Calu3 (cell line): ENCODE measurements at regions of chr22 and their contacts with region 1.

Region 1: GRCh38 chr22:49917974-49918910 is at the starts of genes ALG12 and CRELD2:
- DNase-seq: peak; percentile 97
- H3K4me3 Mint-ChIP-seq: peak within 1 kb of the TSS; percentile 85
- H3K27ac Mint-ChIP-seq: peak within 1 kb of the TSS; percentile 74
- H3K4me1 Mint-ChIP-seq: no peaks in the 10 kb centered on the region
- H3K27me3 Mint-ChIP-seq: no peaks in the 10 kb centered on the region
- CTCF ChIP-seq: no peak
- total RNA-seq, gene ALG12: 25.4 and 27.0 TPM in 2 replicates
- total RNA-seq, gene CRELD2: 57.8 and 64.6 TPM in 2 replicates

Region 2: GRCh38 chr22:49767355-49768062 is 150.7 kb before region 1 on chr22:
- CTCF ChIA-PET with region 1: no interaction called
- intact Hi-C with region 1: loop called (anchors 10 kb)
- DNase-seq: peak; percentile 28
- H3K4me3 Mint-ChIP-seq: no peak overlapping the region
- H3K27ac Mint-ChIP-seq: no peak overlapping the region
- H3K4me1 Mint-ChIP-seq: no peaks in the 10 kb centered on the region
- H3K27me3 Mint-ChIP-seq: no peaks in the 10 kb centered on the region
- CTCF ChIP-seq: peak; percentile 84

Region 3: GRCh38 chr22:49789289-49790141 is 128.7 kb before region 1 on chr22:
- CTCF ChIA-PET with region 1: interaction called, 3 read pairs
- intact Hi-C with region 1: loop called (anchors 5 kb)
- DNase-seq: no peak
- H3K4me3 Mint-ChIP-seq: no peak overlapping the region
- H3K27ac Mint-ChIP-seq: no peak overlapping the region
- H3K4me1 Mint-ChIP-seq: peaks cover 9% of the 10 kb centered on the region
- H3K27me3 Mint-ChIP-seq: no peaks in the 10 kb centered on the region
- CTCF ChIP-seq: no peak

Region 4: GRCh38 chr22:49894322-49895054 is 23.8 kb before region 1 on chr22:
- CTCF ChIA-PET with region 1: no interaction called
- intact Hi-C with region 1: no loop called
- DNase-seq: no peak
- H3K4me3 Mint-ChIP-seq: no peak overlapping the region
- H3K27ac Mint-ChIP-seq: no peak overlapping the region
- H3K4me1 Mint-ChIP-seq: no peaks in the 10 kb centered on the region
- H3K27me3 Mint-ChIP-seq: no peaks in the 10 kb centered on the region
- CTCF ChIP-seq: no peak